ENCODE measurements at regions of chr7 and their contacts with region 1.

Region 1: GRCh38 chr7:19698331-19698730 is 10.5 kb downstream of the POLR1F start:
- DNase-seq: no peak
- H3K4me3 ChIP-seq: no peak overlapping the region
- CTCF ChIP-seq: no peak

Region 2: GRCh38 chr7:19248681-19249080 is 449.6 kb before region 1 on chr7:
- CTCF ChIA-PET with region 1: no interaction called
- POLR2A ChIA-PET with region 1: no interaction called
- DNase-seq: peak; percentile 69
- H3K4me3 ChIP-seq: no peak overlapping the region
- CTCF ChIP-seq: no peak

Region 3: DNA sequence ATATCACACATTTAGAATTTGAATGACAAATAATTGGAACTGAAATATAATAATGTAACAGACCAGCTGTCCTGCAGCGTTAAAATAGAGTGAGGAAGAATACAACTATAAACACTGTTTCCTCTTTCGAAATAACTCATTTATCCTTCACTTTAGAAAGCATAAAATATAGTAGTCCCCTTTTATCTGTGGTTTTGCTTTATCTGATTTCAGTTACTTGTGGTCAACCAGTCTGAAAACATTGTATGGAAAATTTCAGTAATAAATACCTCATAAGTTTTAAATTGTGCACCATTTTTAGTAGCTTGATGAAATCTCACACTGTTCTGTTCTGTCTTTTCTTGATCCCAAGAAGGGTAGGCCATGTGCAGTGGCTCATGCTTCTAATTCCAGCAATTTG is 21.2 kb before region 1 on chr7:
- CTCF ChIA-PET with region 1: no interaction called
- POLR2A ChIA-PET with region 1: no interaction called
- DNase-seq: no peak
- H3K4me3 ChIP-seq: no peak overlapping the region
- CTCF ChIP-seq: no peak

Region 4: GRCh38 chr7:19708397-19709248 is 10.3 kb after region 1 on chr7 and contains the start of gene POLR1F:
- CTCF ChIA-PET with region 1: interaction called, 31 read pairs
- POLR2A ChIA-PET with region 1: interaction called, 4 read pairs
- DNase-seq: peak; percentile 64
- H3K4me3 ChIP-seq: peak within 1 kb of the TSS; percentile 93
- CTCF ChIP-seq: peak; percentile 96

Region 5: DNA sequence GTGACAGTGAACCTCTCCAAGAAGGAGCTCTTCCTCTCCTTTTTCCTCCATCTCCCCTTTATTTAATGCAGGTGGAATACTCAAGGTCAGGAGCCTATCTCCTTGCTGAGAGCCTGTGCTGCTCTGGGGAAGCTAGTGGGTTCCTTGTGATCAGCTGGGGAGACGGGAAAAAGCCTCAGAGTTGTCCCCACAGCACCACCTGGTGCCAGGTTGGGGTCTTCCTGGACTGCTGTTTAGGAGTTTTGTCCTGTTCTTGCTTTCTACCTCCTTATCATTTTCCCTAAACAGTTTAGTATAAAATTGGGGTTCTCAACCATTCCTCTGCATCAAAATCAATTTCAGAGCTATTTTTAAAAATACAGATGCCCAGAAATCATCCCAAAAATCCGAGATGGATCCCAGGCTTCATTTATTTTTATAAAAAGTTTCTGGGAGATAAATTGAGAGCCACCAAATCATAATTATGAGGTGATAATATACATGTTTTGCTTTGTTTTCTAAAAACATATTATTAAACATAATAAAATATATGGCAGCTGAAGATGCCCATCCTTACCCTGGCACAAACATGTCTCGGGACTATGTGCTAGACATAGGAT is 474.5 kb after region 1 on chr7:
- CTCF ChIA-PET with region 1: no interaction called
- POLR2A ChIA-PET with region 1: no interaction called
- DNase-seq: no peak
- H3K4me3 ChIP-seq: no peak overlapping the region
- CTCF ChIP-seq: peak; percentile 59

Measured in AG04449 (cell line).